CD14-positive monocyte (primary cell): ENCODE measurements at regions of chr17 and their contacts with region 1.

Region 1: DNA sequence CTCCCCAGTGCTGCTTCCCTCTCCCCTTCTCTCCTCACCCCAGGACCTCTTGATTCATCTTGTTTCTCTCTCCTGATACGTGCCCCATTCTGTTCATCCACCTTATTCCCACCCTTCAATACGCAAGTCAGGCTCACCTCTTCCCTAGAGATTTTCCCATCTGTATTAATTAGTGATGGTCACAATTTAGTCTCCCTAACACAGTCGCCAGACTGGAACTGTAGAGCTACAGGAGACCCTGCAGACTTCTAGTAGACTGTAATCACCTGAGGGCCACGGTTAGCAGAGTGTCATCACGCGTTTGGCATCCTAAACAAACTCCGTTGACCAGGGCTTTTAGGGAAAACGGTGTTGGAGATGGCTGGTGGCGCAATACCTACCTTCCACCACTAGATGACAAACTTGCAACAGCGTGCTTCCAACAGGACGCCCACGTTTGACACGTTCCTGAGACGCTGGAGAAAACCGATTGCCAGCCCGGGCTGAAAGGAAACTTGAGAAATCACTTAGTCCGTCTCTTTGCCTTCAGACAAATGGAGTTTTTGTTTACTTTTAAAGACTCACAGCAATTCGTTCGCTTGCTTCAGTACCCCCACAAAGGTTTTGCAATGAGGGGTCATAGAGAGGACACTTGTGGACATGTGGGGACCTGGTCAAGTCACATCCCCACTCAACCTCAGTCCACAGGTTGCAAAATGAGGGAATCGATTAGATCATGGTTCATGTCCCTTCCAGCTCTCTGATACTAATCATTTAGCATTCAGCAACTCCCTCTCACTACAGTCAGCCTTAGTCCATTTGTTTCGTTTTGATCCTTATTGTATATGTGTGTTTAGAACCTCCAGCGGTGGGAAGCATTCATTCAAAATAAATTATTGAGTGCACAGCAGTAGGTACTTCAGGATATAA is 20.6 kb downstream of the MYL4 start:
- DNase-seq: peak; percentile 68 to 82 (median 76)
- H3K4me3 ChIP-seq: peak overlapping the region in 2 of 3 experiments; percentile 13 to 55
- H3K4me3 Mint-ChIP-seq: peak overlapping the region; percentile 45 to 83
- H3K27ac ChIP-seq: no peak overlapping the region
- H3K27ac Mint-ChIP-seq: peak overlapping the region in 2 of 7 donors; percentile 43 to 82
- H3K4me1 ChIP-seq: peaks cover 17 to 24% of the 10 kb centered on the region in 2 donors
- H3K4me1 Mint-ChIP-seq: peaks cover 26% of the 10 kb centered on the region
- H3K27me3 ChIP-seq: no peaks in the 10 kb centered on the region
- H3K27me3 Mint-ChIP-seq: peaks cover 8 to 11% (median 10%) of the 10 kb centered on the region in 3 donors
- CTCF ChIP-seq: peak; percentile 87

Region 2: DNA sequence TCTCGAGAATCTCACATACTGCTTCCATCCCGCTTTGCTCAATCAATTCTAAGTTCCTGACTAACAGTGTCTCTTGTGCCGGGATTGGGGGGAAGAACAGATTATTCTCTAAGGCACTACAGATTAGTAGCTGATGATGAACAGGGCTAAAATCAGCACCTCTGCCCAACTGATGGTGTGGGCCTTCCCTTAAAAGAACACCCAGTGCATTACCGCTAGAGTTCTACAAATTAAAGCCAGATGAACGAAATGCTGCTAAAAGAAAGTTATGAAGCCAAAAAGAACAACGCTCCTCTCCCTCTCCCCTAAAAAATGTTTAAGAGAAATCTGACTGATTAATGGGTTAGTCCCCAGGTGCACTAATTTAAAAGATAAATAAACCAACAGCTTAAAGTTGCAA is 45.1 kb before region 1 on chr17:
- intact Hi-C with region 1: no loop called
- DNase-seq: no peak
- H3K4me3 ChIP-seq: no peak overlapping the region
- H3K4me3 Mint-ChIP-seq: no peak overlapping the region
- H3K27ac ChIP-seq: peak overlapping the region in 1 of 2 donors; percentile 25
- H3K27ac Mint-ChIP-seq: peak overlapping the region in 3 of 7 donors; percentile 13 to 58 (median 52)
- H3K4me1 ChIP-seq: peaks cover 10 to 19% of the 10 kb centered on the region in 2 donors
- H3K4me1 Mint-ChIP-seq: peaks cover 37% of the 10 kb centered on the region
- H3K27me3 ChIP-seq: no peaks in the 10 kb centered on the region
- H3K27me3 Mint-ChIP-seq: no peaks in the 10 kb centered on the region
- CTCF ChIP-seq: no peak

Region 3: DNA sequence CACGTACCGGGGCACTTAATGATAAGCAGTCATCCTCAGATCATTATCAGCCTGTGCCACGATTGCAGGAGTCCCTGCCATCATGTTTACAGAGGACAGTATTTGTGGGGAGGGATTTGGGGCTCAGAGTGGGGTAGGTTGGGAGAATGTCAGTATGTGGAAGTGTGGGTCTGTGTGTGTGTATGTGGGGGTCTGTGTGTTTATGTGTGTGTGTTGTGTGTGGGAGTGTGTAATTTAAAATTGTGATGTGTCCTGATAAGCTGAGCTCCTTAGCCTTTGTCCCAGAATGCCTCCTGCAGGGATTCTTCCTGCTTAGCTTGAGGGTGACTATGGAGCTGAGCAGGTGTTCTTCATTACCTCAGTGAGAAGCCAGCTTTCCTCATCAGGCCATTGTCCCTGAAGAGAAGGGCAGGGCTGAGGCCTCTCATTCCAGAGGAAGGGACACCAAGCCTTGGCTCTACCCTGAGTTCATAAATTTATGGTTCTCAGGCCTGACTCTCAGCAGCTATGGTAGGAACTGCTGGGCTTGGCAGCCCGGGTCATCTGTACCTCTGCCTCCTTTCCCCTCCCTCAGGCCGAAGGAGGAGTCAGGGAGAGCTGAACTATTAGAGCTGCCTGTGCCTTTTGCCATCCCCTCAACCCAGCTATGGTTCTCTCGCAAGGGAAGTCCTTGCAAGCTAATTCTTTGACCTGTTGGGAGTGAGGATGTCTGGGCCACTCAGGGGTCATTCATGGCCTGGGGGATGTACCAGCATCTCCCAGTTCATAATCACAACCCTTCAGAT is 80.6 kb after region 1 on chr17:
- intact Hi-C with region 1: loop called (anchors 2 to 5 kb)
- DNase-seq: no peak
- H3K4me3 ChIP-seq: no peak overlapping the region
- H3K4me3 Mint-ChIP-seq: no peak overlapping the region
- H3K27ac ChIP-seq: no peak overlapping the region
- H3K27ac Mint-ChIP-seq: no peak overlapping the region
- H3K4me1 ChIP-seq: no peaks in the 10 kb centered on the region
- H3K4me1 Mint-ChIP-seq: no peaks in the 10 kb centered on the region
- H3K27me3 ChIP-seq: no peaks in the 10 kb centered on the region
- H3K27me3 Mint-ChIP-seq: peaks cover 0 to 5% (median 1%) of the 10 kb centered on the region in 3 donors
- CTCF ChIP-seq: no peak

Region 4: DNA sequence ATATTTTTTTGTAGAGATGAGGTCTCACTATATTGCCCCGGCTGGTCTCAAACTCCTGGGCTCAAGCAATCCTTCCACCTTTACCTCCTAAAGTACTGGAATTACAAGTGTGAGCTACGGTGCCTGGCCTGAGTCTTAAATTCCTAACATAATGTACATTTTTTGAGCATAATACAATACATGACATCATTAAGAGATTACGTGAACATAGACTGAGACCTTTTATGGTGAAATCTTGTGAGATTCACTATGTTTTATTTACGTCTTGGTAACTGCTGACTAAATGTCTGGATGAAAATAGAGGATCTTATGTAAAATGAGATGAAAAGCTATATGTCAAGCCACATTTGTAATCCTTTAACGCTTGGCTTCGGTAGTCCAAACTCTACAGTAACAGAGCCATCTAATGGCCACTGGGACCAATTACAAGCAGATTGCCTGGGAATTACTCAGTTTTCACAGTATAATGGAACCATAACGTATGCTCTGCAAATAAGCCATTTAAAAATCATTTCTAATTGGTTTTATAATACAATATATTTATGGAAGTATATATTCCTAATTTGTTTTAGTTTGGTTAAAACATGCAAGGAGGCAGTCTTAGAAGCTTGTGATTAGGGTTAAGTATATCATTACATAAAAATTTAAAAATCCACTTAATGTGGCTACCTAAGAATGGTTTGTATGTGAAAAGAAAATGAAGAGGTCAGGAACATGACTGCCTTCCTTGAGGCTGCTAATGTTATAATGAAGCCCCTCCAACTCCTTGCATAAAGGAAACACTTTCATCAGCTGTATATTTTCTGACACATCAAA is 85.9 kb after region 1 on chr17:
- intact Hi-C with region 1: loop called (anchors 2 to 5 kb)
- DNase-seq: peak; percentile 52 to 72 (median 68)
- H3K4me3 ChIP-seq: no peak overlapping the region
- H3K4me3 Mint-ChIP-seq: no peak overlapping the region
- H3K27ac ChIP-seq: no peak overlapping the region
- H3K27ac Mint-ChIP-seq: no peak overlapping the region
- H3K4me1 ChIP-seq: no peaks in the 10 kb centered on the region
- H3K4me1 Mint-ChIP-seq: no peaks in the 10 kb centered on the region
- H3K27me3 ChIP-seq: peaks cover 0 to 2% of the 10 kb centered on the region in 2 donors
- H3K27me3 Mint-ChIP-seq: peaks cover 0 to 1% (median 1%) of the 10 kb centered on the region in 3 donors
- CTCF ChIP-seq: peak; percentile 92